ENCODE measurements at regions of chr15 and their contacts with region 1.

Region 1: GRCh38 chr15:84658080-84658787 is at the start of gene NMB:
- DNase-seq: peak; percentile 95
- H3K4me3 ChIP-seq: peak within 1 kb of the TSS; percentile 68
- H3K27ac ChIP-seq: peak within 1 kb of the TSS; percentile 60
- H3K4me1 ChIP-seq: peaks cover 43% of the 10 kb centered on the region
- CTCF ChIP-seq: peak; percentile 81
- total RNA-seq, gene NMB: 5.3 and 10.3 TPM in 2 replicates

Region 2: DNA sequence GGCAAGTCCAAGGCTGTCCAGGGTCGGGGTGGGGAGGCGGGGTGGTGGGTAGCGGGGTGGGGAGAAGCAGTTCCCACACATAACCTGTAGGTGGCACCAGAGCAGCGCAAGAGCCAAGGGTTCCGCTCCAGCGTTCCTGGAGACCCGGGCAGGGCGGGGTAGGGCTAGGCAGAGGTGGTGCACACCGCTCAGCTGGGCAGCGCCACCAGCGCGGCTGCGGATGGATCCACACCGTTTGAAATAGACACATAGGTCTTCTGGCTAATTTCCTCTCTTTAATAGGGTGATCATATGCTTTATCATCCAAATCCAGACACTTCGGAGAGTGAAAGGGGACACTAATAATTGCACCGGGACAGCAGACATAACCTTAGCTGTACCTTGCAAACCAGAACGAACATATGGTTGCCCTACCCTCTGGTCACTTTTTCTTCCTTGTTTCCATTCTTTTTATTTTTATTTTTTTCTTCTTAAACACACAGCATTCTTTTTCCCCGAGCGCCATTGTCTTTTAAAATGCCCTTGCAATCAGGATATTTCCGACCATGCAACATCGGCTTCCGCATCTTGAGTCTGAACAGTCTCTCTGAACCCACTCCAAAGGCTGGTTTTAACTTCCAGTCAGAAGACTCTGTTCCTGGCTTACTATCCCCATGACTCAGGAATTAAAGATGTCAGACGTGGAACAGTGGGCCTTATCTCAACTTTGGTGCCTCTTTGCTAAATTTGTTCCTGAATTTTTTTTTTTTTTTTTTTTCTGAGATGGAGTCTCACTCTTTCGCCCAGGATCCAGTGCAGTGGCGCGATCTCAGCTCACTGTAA is 70.0 kb before region 1 on chr15:
- CTCF ChIA-PET with region 1: interaction called, 3 read pairs
- POLR2A ChIA-PET with region 1: no interaction called
- intact Hi-C with region 1: loop called (anchors 2 kb)
- DNase-seq: peak; percentile 88
- H3K4me3 ChIP-seq: peak overlapping the region; percentile 24
- H3K27ac ChIP-seq: no peak overlapping the region
- H3K4me1 ChIP-seq: peaks cover 2% of the 10 kb centered on the region
- CTCF ChIP-seq: peak; percentile 79

Region 3: DNA sequence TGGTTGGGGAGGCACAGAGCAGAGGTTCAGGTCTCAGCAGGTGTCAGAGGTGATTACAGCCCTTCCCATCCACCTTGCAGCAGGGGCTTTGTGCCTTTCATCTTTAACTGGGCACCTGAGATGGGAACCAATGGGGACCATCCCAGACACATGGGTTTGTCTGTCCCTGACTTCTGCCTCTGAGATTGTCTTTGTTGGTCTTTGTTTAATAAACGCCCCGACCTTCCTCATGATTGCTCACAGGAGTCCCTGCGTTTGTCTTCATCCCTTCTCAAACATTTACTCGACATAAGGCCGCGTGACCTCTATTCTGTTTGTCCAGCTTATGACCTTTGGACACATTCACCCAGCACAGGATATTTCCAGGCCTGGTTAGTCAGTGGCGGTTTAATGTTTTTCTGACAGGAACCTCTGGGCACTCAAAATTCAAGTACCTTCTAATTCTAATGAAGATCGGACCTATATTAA is 51.5 kb before region 1 on chr15:
- CTCF ChIA-PET with region 1: no interaction called
- POLR2A ChIA-PET with region 1: no interaction called
- intact Hi-C with region 1: no loop called
- DNase-seq: no peak
- H3K4me3 ChIP-seq: no peak overlapping the region
- H3K27ac ChIP-seq: no peak overlapping the region
- H3K4me1 ChIP-seq: peaks cover 18% of the 10 kb centered on the region
- CTCF ChIP-seq: no peak

Region 4: GRCh38 chr15:84633311-84634227 is 24.7 kb before region 1 on chr15:
- CTCF ChIA-PET with region 1: interaction called, 3 read pairs
- POLR2A ChIA-PET with region 1: interaction called, 14 read pairs
- intact Hi-C with region 1: no loop called
- DNase-seq: peak; percentile 79
- H3K4me3 ChIP-seq: peak overlapping the region; percentile 76
- H3K27ac ChIP-seq: peak overlapping the region; percentile 18
- H3K4me1 ChIP-seq: peaks cover 40% of the 10 kb centered on the region
- CTCF ChIP-seq: 0 out of 2 replicates have a peak, but pooled peaks have one; percentile 16

Region 5: DNA sequence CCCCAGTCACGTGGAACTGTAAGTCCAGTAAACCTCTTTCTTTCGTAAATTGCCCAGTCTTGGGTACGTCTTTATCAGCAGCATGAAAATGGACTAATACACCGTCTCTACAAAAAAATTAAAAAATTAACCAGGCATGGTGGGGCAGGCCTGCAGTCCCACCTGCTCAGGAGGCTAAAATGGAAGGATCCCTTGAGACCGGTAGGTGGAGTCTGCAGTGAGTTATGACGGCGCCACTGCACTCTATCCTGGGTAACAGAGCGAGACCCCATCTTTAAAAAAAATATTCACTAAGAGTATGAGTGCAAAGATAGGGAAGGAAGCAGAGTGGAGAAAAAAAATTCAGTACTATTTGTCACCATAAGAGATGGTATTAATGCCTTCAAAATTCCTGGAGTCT is 32.1 kb after region 1 on chr15:
- CTCF ChIA-PET with region 1: no interaction called
- POLR2A ChIA-PET with region 1: no interaction called
- intact Hi-C with region 1: no loop called
- DNase-seq: no peak
- H3K4me3 ChIP-seq: no peak overlapping the region
- H3K27ac ChIP-seq: no peak overlapping the region
- H3K4me1 ChIP-seq: peaks cover 7% of the 10 kb centered on the region
- CTCF ChIP-seq: no peak

Region 6: GRCh38 chr15:84734794-84735479 is 76.7 kb after region 1 on chr15:
- CTCF ChIA-PET with region 1: no interaction called
- POLR2A ChIA-PET with region 1: interaction called, 8 read pairs
- intact Hi-C with region 1: loop called (anchors 1 kb)
- DNase-seq: peak; percentile 95
- H3K4me3 ChIP-seq: peak overlapping the region; percentile 62
- H3K27ac ChIP-seq: peak overlapping the region; percentile 98
- H3K4me1 ChIP-seq: peaks cover 59% of the 10 kb centered on the region
- CTCF ChIP-seq: no peak

Region 7: DNA sequence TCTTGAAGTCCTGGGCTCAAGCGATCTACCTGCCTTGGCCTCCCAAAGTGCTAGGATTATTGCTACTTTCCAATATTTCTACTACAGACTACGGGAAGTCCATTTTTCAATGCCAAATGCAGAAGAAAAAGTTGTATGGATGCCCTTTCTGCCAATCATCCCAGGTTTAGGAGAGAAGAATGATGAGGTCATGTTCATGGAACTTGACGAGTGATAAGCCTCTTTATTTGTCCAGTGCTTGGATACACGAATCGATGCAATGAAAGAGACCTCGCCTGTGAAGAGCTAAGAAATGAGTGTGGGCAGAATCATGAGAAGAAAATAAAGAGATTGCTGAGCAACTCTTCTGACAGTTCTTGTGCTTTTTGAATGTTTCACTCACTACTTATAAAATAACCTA is 225.2 kb after region 1 on chr15:
- CTCF ChIA-PET with region 1: interaction called, 3 read pairs
- POLR2A ChIA-PET with region 1: no interaction called
- intact Hi-C with region 1: loop called (anchors 1 kb)
- DNase-seq: no peak
- H3K4me3 ChIP-seq: no peak overlapping the region
- H3K27ac ChIP-seq: no peak overlapping the region
- H3K4me1 ChIP-seq: no peaks in the 10 kb centered on the region
- CTCF ChIP-seq: no peak

Region 8: DNA sequence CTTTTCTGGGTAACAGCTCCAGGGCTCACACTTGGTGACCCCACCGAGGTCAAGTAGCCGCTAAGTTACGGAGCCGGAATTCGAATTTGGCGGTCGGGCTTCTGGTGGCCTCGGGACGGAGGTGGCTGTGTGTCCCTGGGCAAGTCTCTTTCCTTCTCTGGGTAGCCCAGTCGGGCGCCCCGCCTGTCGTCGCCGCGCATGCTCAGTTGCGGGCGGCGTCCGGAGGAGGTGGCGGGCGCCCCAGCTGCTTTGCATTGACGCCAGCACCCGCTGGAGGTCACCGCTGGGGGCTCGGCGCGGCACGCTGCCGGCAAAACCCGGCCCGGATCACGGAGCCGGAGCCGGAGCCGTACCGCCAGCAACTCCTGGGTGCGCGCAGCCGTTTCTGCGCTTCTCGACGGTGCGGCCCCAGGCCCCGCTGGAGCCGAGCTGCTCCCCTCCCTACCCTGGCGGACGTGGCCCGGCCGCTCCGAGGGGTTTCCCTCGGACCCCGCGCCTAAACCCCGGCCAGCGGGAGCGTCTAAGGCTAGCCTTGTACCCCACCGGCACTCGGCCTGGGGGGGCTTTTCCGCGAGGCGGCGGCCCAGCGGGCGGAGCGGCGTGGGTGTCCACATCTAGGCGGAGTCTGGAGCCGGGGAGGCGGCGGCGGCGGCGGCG is 322.9 kb after region 1 on chr15:
- CTCF ChIA-PET with region 1: no interaction called
- POLR2A ChIA-PET with region 1: no interaction called
- intact Hi-C with region 1: loop called (anchors 1 kb)
- DNase-seq: peak; percentile 98
- H3K4me3 ChIP-seq: peak overlapping the region; percentile 73
- H3K27ac ChIP-seq: peak overlapping the region; percentile 68
- H3K4me1 ChIP-seq: peaks cover 44% of the 10 kb centered on the region
- CTCF ChIP-seq: no peak

Measured in OCI-LY7 (cell line).